ENCODE measurements at regions of chr5 and their contacts with region 1.

Region 1: GRCh38 chr5:148875205-148875875 is 48.9 kb downstream of the ADRB2 start:
- DNase-seq: peak in 1 of 2 donors; percentile 45
- ATAC-seq: peak in 6 of 8 donors; percentile 60 to 83 (median 68)
- H3K4me3 ChIP-seq: no peak overlapping the region
- H3K27ac ChIP-seq: peak overlapping the region in 4 of 10 donors; percentile 53 to 72 (median 64)
- H3K4me1 ChIP-seq: peaks cover 11 to 35% (median 30%) of the 10 kb centered on the region in 9 donors
- H3K27me3 ChIP-seq: no peaks in the 10 kb centered on the region
- CTCF ChIP-seq: no peak

Region 2: DNA sequence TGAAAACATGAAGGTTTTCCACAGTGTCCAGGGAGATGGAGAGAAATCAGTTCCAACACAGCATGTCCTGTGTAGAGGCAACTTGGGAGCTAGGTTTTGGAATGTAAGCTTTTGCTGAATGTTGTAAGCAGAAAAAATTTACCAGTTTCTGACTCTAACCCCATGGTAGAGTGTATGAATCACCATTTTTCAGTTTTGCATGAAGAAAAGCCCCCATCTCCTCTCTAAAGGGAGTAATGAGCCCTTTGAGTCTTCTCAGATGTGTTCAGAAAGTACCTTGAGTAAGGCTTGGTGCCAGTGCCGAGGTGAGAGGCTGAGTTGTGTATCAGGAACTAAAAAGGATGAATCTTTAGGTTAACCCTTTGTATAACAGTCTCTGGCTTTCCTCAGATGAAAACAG is 47.3 kb after region 1 on chr5:
- intact Hi-C with region 1: loop called in 1 of 10 experiments (anchors 10 kb)
- DNase-seq: no peak
- ATAC-seq: no peak
- H3K4me3 ChIP-seq: no peak overlapping the region
- H3K27ac ChIP-seq: no peak overlapping the region
- H3K4me1 ChIP-seq: peaks cover 0 to 16% (median 6%) of the 10 kb centered on the region in 9 donors
- H3K27me3 ChIP-seq: no peaks in the 10 kb centered on the region
- CTCF ChIP-seq: no peak

Measured in heart right ventricle (tissue), 16 donors.